ENCODE measurements at regions of chr3 and their contacts with region 1.

Region 1: GRCh38 chr3:40191850-40192448 is 117.6 kb upstream of the EIF1B start:
- DNase-seq: peak; percentile 68
- ATAC-seq: peak; percentile 57
- H3K4me3 Mint-ChIP-seq: no peak overlapping the region
- H3K27ac Mint-ChIP-seq: no peak overlapping the region
- H3K4me1 Mint-ChIP-seq: no peaks in the 10 kb centered on the region
- H3K27me3 Mint-ChIP-seq: peaks cover 2% of the 10 kb centered on the region

Region 2: DNA sequence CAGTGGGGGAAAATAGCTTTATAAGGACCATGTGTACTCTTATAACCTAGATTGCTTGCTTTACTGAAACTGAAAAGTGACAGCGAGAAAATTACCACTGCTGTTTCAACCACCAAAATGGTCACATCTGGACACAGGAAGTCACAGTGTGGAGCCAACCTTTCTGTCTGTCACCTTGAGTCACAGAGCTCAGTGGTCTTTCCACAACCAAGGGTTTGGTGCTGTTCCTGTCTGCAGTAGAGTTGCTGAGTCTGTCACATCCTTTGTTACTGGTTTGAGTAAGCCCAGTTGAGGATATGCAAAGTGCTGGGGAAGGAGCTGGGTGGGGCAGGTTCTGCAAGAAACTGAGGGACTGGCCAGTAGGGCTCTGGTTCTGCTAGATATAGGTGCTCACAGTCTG is 21.6 kb before region 1 on chr3:
- CTCF ChIA-PET with region 1: interaction called, 14 read pairs
- DNase-seq: peak; percentile 70
- ATAC-seq: peak; percentile 85
- H3K4me3 Mint-ChIP-seq: no peak overlapping the region
- H3K27ac Mint-ChIP-seq: no peak overlapping the region
- H3K4me1 Mint-ChIP-seq: peaks cover 15% of the 10 kb centered on the region
- H3K27me3 Mint-ChIP-seq: no peaks in the 10 kb centered on the region

Region 3: GRCh38 chr3:40179016-40179415 is 12.9 kb before region 1 on chr3:
- CTCF ChIA-PET with region 1: interaction called, 12 read pairs
- DNase-seq: peak; percentile 75
- ATAC-seq: no peak
- H3K4me3 Mint-ChIP-seq: no peak overlapping the region
- H3K27ac Mint-ChIP-seq: no peak overlapping the region
- H3K4me1 Mint-ChIP-seq: no peaks in the 10 kb centered on the region
- H3K27me3 Mint-ChIP-seq: no peaks in the 10 kb centered on the region

Region 4: DNA sequence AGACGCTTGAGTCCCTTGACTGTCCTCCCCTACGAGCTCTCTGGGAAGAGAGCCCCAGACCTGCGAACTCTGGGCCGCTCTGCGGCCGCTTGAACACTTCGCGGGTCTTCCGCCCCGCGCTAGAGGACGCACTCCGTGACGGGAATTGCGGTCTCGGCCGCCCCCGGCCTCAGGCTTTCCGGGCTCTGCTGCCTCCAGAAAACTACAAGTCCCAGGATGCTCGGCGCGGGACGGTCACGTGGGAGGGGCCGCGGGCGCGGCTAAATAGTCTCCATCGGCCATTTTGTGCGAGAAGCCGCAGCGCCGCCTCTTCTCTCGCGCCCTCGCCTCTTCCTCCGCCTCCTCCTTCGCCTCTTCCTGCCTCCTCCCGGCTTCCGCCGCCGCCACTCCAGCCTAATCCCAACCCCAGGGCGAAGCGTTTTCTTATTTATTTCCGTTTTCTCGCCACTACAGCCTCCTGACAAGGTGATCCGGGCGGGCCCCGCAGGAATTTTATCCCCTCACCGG is 117.5 kb after region 1 on chr3 and contains the start of gene EIF1B:
- CTCF ChIA-PET with region 1: interaction called, 117 read pairs
- DNase-seq: peak; percentile 98
- ATAC-seq: peak; percentile 90
- H3K4me3 Mint-ChIP-seq: peak within 1 kb of the TSS; percentile 98
- H3K27ac Mint-ChIP-seq: peak within 1 kb of the TSS; percentile 99
- H3K4me1 Mint-ChIP-seq: peaks cover 20% of the 10 kb centered on the region
- H3K27me3 Mint-ChIP-seq: no peaks in the 10 kb centered on the region
- total RNA-seq, gene EIF1B: 33.9 to 41.5 TPM

Region 5: DNA sequence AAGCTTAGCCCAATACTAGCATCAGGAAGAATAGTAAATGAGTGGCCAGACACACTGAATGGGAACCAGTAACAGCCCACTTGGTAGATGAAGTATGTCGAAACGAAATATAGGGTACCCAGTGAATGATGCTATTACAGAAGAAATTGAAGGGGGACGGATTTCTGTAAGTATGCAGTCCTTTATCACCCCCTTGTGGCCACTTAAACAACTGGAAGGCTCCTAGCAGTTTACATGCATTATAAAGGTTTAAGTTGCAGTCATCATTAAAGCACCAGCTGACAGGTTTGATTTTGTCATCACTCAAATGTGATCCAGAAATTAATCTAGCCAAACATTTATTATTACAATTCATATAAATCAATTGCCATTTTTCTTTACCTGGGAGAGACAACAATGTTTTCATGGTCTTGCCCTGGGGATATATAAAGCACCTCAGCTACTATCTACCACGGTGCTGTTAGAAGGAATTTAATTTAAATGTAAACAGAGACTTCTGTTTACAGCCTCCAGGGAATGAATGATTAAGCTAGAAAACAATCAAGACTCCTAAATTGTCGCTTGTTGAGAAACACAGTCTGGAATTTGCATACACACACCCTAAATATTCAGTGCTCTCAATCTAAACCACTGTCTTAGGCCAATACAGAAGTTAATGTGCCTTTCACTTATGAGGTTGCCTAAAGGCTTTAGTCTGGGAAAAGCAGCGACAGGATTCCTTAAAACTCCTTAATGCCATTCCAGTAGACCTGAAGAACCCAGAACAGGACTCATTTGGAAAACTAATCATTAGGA is 125.3 kb after region 1 on chr3:
- CTCF ChIA-PET with region 1: interaction called, 117 read pairs
- DNase-seq: peak; percentile 62
- ATAC-seq: peak; percentile 76
- H3K4me3 Mint-ChIP-seq: no peak overlapping the region
- H3K27ac Mint-ChIP-seq: no peak overlapping the region
- H3K4me1 Mint-ChIP-seq: peaks cover 2% of the 10 kb centered on the region
- H3K27me3 Mint-ChIP-seq: no peaks in the 10 kb centered on the region

Measured in activated CD8-positive, alpha-beta memory T cell treated with anti-CD3 and anti-CD28 coated beads, Interleukin-2, amount 10 ng/mL, durations not matched to agents 7 days and 5 days (primary cell).